ENCODE measurements at regions of chr17 and their contacts with region 1.

Region 1: GRCh38 chr17:7234083-7234951 is at the start of gene DVL2:
- DNase-seq: peak; percentile 77 to 93 (median 86)
- ATAC-seq: peak; percentile 67
- H3K4me3 ChIP-seq: peak within 1 kb of the TSS; percentile 73
- H3K27ac ChIP-seq: peak within 1 kb of the TSS; percentile 89
- H3K4me1 ChIP-seq: peaks cover 28 to 31% of the 10 kb centered on the region in 2 experiments; a peak in 4 of 5 replicates
- H3K27me3 ChIP-seq: no peaks in the 10 kb centered on the region
- CTCF ChIP-seq: no peak; a peak in 1 of 6 replicates
- EP300 ChIP-seq: peak; percentile 47; the same call in 1 of the 2 replicates
- POLR2A ChIP-seq: peak; percentile 86
- RAD21 ChIP-seq: no peak
- polyA plus RNA-seq, gene DVL2: 1.3 TPM

Region 2: DNA sequence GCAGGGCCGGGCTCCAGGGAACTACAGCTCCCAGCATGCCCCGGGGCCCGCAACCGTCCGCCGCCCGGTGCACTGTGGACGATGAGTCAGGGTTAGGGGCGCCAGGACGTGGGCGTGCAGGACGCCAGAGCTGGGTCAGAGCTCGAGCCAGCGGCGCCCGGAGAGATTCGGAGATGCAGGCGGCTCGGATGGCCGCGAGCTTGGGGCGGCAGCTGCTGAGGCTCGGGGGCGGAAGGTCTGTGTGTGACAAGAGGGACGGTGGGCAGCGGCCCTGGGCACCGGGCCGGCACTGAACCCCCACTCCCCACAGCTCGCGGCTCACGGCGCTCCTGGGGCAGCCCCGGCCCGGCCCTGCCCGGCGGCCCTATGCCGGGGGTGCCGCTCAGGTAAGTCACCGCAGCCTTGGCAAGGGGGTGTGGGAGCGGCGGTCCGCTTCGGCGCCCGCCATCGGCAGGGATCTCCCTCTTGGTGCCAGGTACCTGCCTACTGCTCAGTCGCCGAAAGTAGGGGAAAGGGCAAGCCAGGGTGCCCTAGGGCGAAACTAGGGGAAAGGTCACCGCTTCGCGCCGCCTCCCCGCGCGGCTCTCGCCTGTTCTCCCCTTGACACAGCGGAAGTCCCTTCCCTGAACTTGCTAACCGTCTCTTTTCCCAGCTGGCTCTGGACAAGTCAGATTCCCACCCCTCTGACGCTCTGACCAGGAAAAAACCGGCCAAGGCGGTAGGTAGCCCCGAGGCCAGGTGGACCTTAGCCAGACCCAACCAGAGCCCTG is 14.3 kb before region 1 on chr17 and contains the starts of genes ACADVL and DLG4:
- CTCF ChIA-PET with region 1: no interaction called
- POLR2A ChIA-PET with region 1: interaction called, 73 read pairs
- in situ Hi-C with region 1: no loop called
- intact Hi-C with region 1: no loop called
- DNase-seq: peak; percentile 75 to 89 (median 80)
- ATAC-seq: peak; percentile 88
- H3K4me3 ChIP-seq: peak within 1 kb of the TSS; percentile 87
- H3K27ac ChIP-seq: peak within 1 kb of the TSS; percentile 90
- H3K4me1 ChIP-seq: peaks cover 40 to 55% of the 10 kb centered on the region in 2 experiments
- H3K27me3 ChIP-seq: no peaks in the 10 kb centered on the region
- CTCF ChIP-seq: no peak
- EP300 ChIP-seq: peak; percentile 31; the same call in 1 of the 2 replicates
- POLR2A ChIP-seq: peak; percentile 68
- RAD21 ChIP-seq: no peak
- polyA plus RNA-seq, gene ACADVL: 25.5 to 46.2 TPM
- polyA plus RNA-seq, gene DLG4: 0.03 to 0.07 TPM